HCT116 (cell line): ENCODE measurements at regions of chr16 and their contacts with region 1.

Region 1: GRCh38 chr16:9033125-9033830 is 58.2 kb upstream of the HAPSTR1 start:
- DNase-seq: peak; percentile 74
- ATAC-seq: peak; percentile 91
- H3K4me3 ChIP-seq: no peak overlapping the region
- H3K27ac ChIP-seq: no peak overlapping the region
- H3K4me1 ChIP-seq: peaks cover 0 to 10% of the 10 kb centered on the region in 2 experiments; a peak in 2 of 4 replicates
- H3K27me3 ChIP-seq: no peaks in the 10 kb centered on the region
- CTCF ChIP-seq: peak in 2 of 3 experiments; percentile 64 to 74; a peak in 4 of 6 replicates
- POLR2A ChIP-seq: no peak
- RAD21 ChIP-seq: peak; percentile 46; the same call in 1 of the 2 replicates

Region 2: GRCh38 chr16:8905168-8905762 is 128.0 kb before region 1 on chr16:
- CTCF ChIA-PET with region 1: no interaction called
- POLR2A ChIA-PET with region 1: no interaction called
- RAD21 ChIA-PET with region 1: no interaction called
- intact Hi-C with region 1: loop called (anchors 10 kb)
- DNase-seq: peak; percentile 19
- ATAC-seq: peak; percentile 90
- H3K4me3 ChIP-seq: no peak overlapping the region
- H3K27ac ChIP-seq: no peak overlapping the region
- H3K4me1 ChIP-seq: no peaks in the 10 kb centered on the region
- H3K27me3 ChIP-seq: no peaks in the 10 kb centered on the region
- CTCF ChIP-seq: peak; percentile 51 to 56 (median 52)
- POLR2A ChIP-seq: no peak
- RAD21 ChIP-seq: peak; percentile 70

Region 3: DNA sequence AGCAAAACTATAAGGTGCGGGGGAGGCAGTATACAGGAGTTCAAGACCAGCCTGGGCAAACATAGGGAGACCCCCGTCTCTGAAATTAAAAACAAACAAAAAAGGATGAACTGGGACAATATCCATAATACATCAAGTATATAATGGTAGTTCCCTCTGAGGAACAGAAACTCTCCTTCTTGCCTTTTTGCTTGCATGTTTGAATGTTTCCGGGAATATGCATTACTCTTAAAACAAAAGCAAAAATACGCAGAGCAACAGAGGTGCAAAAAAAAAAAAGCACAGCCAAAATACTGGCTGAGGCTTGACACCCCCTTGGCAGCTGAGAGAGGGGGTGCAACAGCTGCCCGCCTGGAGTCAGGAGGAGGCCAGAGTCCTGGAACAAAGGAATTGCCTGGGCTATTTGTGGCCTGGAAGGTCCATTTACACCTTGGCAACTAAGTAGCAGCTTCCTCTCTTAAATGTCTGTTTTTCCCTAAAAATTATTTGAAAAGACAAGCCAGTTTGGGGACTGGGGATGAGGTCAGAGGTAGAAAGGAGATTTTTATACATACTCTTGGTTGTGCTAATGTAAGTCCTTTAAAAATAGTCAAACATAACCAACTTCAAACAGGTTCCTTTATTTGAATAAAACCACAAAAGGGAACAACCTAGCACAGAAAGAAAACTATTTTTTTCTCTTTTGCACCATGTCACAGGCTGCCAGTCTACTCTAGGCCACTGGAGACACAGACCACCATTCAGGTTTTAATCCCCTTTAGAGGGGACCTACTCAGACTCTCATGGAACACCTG is 89.1 kb before region 1 on chr16:
- CTCF ChIA-PET with region 1: no interaction called
- POLR2A ChIA-PET with region 1: no interaction called
- RAD21 ChIA-PET with region 1: no interaction called
- intact Hi-C with region 1: no loop called
- DNase-seq: no peak
- ATAC-seq: no peak
- H3K4me3 ChIP-seq: no peak overlapping the region
- H3K27ac ChIP-seq: no peak overlapping the region
- H3K4me1 ChIP-seq: no peaks in the 10 kb centered on the region
- H3K27me3 ChIP-seq: no peaks in the 10 kb centered on the region
- CTCF ChIP-seq: no peak
- POLR2A ChIP-seq: no peak
- RAD21 ChIP-seq: no peak